Motor neuron (in vitro differentiated cells): ENCODE measurements at regions of chr2 and their contacts with region 1.

Region 1: DNA sequence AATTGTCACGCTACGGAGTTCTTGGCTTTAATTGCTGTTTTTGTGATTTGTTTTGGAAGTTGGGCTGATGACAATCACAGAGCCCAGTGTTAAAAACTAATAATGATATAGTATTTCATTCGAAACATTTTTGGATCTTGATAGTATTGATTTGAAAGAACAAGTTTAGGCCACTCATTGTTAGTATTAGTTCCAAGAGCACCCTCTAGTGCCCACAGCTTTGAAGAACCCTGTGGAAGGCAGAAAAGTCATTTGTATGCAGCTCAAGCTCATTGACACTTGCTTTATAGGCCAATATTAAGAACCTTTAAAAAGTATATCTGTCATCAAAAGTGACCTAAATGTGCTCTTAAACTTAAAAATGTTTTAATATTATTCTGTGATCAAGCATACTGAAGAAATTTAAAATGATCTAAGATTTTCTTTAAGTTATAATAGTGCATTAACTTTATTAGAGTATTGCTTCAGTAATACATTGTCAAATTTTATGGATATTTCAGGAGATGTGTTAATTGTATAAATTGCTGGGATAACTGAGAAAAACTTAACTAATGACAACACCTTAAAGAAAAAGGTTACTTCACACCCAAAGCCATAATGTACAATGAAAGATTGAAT is 191.0 kb downstream of the GRB14 start:
- ATAC-seq: peak in 6 of 8 experiments; percentile 43 to 63 (median 54)
- H3K4me3 ChIP-seq: no peak overlapping the region
- H3K27ac ChIP-seq: no peak overlapping the region
- H3K4me1 ChIP-seq: peaks cover 0 to 17% of the 10 kb centered on the region in 2 donors

Region 2: GRCh38 chr2:163370168-163370886 is 1059.9 kb before region 1 on chr2:
- in situ Hi-C with region 1: loop called in 1 of 9 experiments (anchors 25 kb)
- ATAC-seq: no peak
- H3K4me3 ChIP-seq: no peak overlapping the region
- H3K27ac ChIP-seq: no peak overlapping the region
- H3K4me1 ChIP-seq: no peaks in the 10 kb centered on the region